Transverse colon (tissue), 4 donors: ENCODE measurements at regions of chr3 and their contacts with region 1.

Region 1: GRCh38 chr3:134201201-134202130 is 49.2 kb downstream of the RYK start:
- DNase-seq: no peak
- H3K4me3 ChIP-seq: no peak overlapping the region
- H3K27ac ChIP-seq: no peak overlapping the region
- H3K4me1 ChIP-seq: no peaks in the 10 kb centered on the region
- H3K27me3 ChIP-seq: no peaks in the 10 kb centered on the region
- CTCF ChIP-seq: no peak
- EP300 ChIP-seq: no peak
- POLR2A ChIP-seq: no peak

Region 2: DNA sequence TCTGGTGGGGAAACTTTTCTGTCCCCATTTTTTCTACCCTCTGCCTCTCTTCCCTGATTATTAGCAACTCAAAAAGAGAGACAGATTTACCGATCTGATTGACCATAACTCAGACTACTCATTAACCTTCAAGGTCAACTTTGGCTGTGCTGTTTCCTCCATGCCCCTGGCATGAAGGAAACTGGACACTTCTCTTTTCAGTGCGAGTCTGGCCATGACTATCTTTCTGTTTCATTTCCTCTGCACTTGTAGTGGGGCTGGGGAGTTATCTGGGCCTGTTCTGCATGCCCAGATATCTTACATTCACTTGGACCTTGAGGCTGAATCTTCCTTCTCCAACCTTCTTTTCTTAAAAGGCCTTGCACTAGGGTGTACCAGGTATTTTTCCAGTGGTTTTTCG is 94.9 kb before region 1 on chr3:
- in situ Hi-C with region 1: no loop called
- intact Hi-C with region 1: no loop called
- DNase-seq: no peak
- H3K4me3 ChIP-seq: no peak overlapping the region
- H3K27ac ChIP-seq: no peak overlapping the region
- H3K4me1 ChIP-seq: no peaks in the 10 kb centered on the region
- H3K27me3 ChIP-seq: no peaks in the 10 kb centered on the region
- CTCF ChIP-seq: no peak
- EP300 ChIP-seq: no peak
- POLR2A ChIP-seq: no peak

Region 3: DNA sequence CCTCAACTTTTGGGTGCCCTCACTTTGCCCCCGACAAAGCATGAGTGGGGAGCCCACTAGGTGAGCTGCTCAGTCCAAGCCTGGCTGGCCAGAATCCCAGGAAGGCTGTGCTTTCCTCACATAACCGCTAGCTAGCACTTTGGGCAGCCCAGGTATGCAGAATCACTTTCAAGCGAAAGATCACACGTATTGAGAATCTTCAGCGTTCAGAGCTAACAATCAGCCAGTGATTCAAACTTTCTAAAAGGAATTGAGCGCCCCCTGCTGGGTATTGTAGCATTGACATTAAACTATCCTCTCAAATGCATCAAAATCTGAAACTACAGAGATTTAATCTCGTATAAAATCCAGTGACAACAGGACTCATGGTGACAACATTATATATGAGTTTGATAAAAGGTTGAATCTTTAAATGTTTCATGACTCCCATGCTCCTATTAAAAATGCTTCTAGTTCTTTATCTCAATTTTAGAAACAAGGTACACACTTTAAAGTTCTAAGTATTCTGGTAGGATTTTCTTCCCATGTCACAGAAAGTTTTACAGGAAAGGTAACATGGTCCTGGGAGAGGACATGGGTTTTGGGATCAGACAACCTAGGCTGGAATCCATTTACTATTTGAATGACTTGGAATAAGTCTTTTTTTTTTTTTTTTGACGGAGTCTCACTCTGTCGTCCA is 272.5 kb after region 1 on chr3:
- in situ Hi-C with region 1: loop called in 2 of 4 experiments (anchors 10 to 25 kb)
- intact Hi-C with region 1: no loop called
- DNase-seq: peak; percentile 77
- H3K4me3 ChIP-seq: no peak overlapping the region
- H3K27ac ChIP-seq: no peak overlapping the region
- H3K4me1 ChIP-seq: peaks cover 0 to 3% (median 0%) of the 10 kb centered on the region in 4 donors
- H3K27me3 ChIP-seq: no peaks in the 10 kb centered on the region
- CTCF ChIP-seq: peak; percentile 80 to 88 (median 82)
- EP300 ChIP-seq: no peak
- POLR2A ChIP-seq: no peak